K562 (cell line): ENCODE measurements at regions of chr6 and their contacts with region 1.

Region 1: GRCh38 chr6:147209762-147210449 is 5.7 kb downstream of the STXBP5 start:
- DNase-seq: no peak
- ATAC-seq: no peak
- H3K4me3 ChIP-seq: peak overlapping the region; percentile 88
- H3K27ac ChIP-seq: peak overlapping the region; percentile 88; the same call in 1 of the 3 replicates
- H3K4me1 ChIP-seq: peaks cover 0 to 34% of the 10 kb centered on the region in 2 experiments
- H3K27me3 ChIP-seq: no peaks in the 10 kb centered on the region
- CTCF ChIP-seq: no peak
- EP300 ChIP-seq: no peak
- POLR2A ChIP-seq: peak; percentile 45; the same call in 1 of the 2 replicates
- RAD21 ChIP-seq: no peak

Region 2: GRCh38 chr6:147222160-147222838 is 12.4 kb after region 1 on chr6:
- CTCF ChIA-PET with region 1: no interaction called
- POLR2A ChIA-PET with region 1: interaction called, 18 read pairs
- in situ Hi-C with region 1: no loop called
- intact Hi-C with region 1: loop called (anchors 1 kb)
- DNase-seq: peak; percentile 26 to 92 (median 56)
- ATAC-seq: peak; percentile 84
- H3K4me3 ChIP-seq: no peak overlapping the region; the same call in 1 of the 2 replicates
- H3K27ac ChIP-seq: peak overlapping the region; percentile 64
- H3K4me1 ChIP-seq: peaks cover 4 to 59% of the 10 kb centered on the region in 2 experiments; a peak in 3 of 5 replicates
- H3K27me3 ChIP-seq: no peaks in the 10 kb centered on the region
- CTCF ChIP-seq: peak; percentile 24 to 69 (median 61); a peak in 5 of 6 replicates
- EP300 ChIP-seq: peak; percentile 91
- POLR2A ChIP-seq: no peak; the same call in 1 of the 2 replicates
- RAD21 ChIP-seq: peak; percentile 47 to 48

Region 3: DNA sequence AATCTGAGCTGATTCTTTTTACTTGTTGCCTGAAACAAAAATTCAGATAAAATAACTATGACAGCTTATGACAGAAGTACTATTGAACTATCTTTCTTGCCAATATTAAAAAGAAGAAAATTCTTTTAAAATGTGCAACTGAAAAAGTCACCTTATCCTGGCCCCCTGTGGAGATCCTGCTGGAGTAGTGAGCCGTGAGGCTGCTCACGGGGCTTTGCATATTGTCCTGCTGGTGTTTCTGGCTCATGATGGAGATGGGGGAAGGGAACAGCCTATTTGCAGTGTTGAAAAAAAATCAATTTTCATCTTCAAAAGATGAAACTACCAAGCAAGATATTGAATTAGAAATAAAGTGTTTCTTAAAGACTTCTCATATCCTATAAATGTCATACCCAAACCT is 514.5 kb after region 1 on chr6:
- CTCF ChIA-PET with region 1: no interaction called
- POLR2A ChIA-PET with region 1: no interaction called
- in situ Hi-C with region 1: no loop called
- intact Hi-C with region 1: no loop called
- DNase-seq: no peak
- ATAC-seq: no peak
- H3K4me3 ChIP-seq: no peak overlapping the region
- H3K27ac ChIP-seq: no peak overlapping the region
- H3K4me1 ChIP-seq: peaks cover 0 to 3% of the 10 kb centered on the region in 2 experiments; a peak in 1 of 5 replicates
- H3K27me3 ChIP-seq: no peaks in the 10 kb centered on the region
- CTCF ChIP-seq: no peak
- EP300 ChIP-seq: no peak
- POLR2A ChIP-seq: no peak
- RAD21 ChIP-seq: no peak